ENCODE measurements at regions of chr2 and their contacts with region 1.

Region 1: DNA sequence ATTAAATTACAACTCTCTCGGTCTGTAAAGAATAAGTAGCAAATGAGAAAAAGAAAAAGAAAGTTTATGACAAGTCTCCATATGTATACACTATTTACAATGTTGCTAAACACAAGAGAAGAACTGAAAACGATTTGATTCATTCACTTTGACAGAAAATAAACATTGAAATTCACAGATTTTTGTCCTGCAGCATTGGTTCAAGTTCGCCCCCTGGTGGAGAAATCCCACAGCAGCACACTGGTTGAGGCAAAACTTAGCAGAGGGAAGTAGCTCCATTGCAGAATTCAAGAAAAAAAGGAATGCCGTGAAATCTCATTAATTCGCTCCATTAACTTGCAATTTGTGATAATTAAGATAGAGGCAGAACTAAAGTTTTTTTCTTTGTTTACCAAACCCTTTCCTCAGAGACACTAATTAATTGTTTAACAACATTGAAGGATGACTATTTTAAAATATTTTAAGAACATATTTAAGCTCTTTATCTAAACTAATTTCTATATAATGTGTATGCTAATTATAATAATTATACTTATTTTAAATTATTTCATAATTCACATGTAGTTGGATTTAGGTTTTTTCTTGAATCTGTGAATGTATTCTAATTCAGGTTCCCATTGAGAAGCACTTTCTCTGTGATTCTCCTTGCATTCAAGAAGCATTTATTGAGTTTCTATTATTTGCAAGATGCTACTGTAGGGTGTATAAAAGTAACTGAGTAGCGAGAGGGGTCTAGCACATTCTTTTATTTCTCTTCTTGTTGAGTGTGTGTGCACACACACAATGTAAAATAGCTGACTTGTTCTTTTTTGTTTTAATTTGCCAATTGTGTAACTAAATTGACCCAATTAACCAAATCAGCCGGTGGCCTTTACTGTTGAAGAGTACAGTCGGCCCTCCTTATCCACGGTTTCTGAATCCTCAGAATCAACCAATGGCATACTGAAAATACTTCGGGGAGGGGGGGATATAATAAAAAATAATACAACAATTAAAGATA is 74.1 kb downstream of the COL4A3 start:
- DNase-seq: peak; percentile 80
- ATAC-seq: no peak
- H3K4me3 Mint-ChIP-seq: no peak overlapping the region
- H3K27ac Mint-ChIP-seq: no peak overlapping the region
- H3K4me1 Mint-ChIP-seq: no peaks in the 10 kb centered on the region
- H3K27me3 Mint-ChIP-seq: peaks cover 6% of the 10 kb centered on the region

Region 2: DNA sequence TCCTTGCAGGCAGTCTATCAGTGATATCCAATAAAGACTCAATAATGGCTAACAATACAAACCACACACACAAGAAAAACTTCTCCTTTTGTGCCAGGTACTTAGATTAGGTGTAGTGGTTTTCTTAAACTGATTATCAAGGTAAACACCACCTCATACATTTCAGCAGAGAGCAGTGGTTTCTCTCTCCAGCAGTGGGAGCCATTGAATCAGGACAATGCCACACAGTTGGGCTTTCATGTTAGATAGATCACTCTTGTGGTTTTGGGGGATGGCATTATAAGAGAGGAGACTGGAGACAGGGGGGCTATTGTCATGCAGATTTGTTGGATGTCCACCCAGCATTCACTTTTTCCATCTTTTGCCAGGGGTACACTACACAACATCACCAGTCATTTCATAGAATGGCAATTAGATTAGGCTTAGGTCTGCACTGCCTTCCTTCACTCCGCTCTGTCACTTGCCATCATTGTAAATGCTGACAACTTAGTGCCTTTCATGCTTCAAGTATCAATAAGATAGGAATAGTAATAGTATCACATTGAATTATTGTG is 425.3 kb before region 1 on chr2:
- CTCF ChIA-PET with region 1: no interaction called
- POLR2A ChIA-PET with region 1: no interaction called
- intact Hi-C with region 1: loop called in 1 of 2 experiments (anchors 10 kb)
- DNase-seq: peak; percentile 17
- ATAC-seq: no peak
- H3K4me3 Mint-ChIP-seq: no peak overlapping the region
- H3K27ac Mint-ChIP-seq: no peak overlapping the region
- H3K4me1 Mint-ChIP-seq: no peaks in the 10 kb centered on the region
- H3K27me3 Mint-ChIP-seq: peaks cover 23% of the 10 kb centered on the region

Region 3: DNA sequence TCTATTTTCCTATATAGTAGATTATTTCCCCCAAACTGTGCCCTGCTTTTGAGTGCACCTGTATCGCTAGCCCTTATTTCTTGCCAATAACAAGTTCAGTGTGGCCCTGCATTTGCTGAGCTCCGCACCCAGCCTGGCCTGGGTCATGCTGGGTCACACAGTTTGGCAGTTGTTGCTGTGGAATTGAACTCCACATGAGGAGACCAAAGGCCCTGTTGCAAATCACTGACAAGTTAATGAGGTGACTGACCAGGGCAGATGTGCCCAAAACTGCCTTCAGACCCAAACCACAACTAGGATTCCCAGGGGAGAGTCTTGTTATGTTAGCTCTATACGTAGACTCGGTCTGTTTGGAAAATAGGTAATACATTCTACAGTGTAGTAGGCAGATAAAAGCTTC is 105.6 kb before region 1 on chr2:
- CTCF ChIA-PET with region 1: interaction called, 20 read pairs
- POLR2A ChIA-PET with region 1: interaction called, 4 read pairs
- intact Hi-C with region 1: loop called (anchors 1 kb)
- DNase-seq: no peak
- ATAC-seq: no peak
- H3K4me3 Mint-ChIP-seq: no peak overlapping the region
- H3K27ac Mint-ChIP-seq: no peak overlapping the region
- H3K4me1 Mint-ChIP-seq: no peaks in the 10 kb centered on the region
- H3K27me3 Mint-ChIP-seq: peaks cover 7% of the 10 kb centered on the region

Region 4: DNA sequence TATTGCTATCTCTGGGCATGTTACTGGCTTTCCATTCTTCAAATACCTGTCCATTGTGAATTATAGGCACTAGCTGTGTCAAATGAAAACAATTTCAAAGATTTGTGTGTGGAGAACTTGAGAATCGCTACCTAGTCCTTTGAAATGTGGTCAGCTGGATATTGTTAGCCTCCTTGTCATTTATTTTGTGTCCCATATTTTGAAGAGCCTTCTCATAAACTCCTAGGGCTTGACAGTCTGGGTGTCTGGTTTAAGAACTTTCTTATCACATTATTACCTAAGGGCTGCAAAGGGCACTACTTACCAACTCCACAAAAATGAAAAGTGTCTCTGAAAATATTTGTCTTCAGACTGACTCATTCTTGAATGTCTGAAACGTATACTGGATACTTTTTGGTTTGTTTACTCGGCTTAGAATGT is 23.9 kb before region 1 on chr2:
- CTCF ChIA-PET with region 1: interaction called, 10 read pairs
- POLR2A ChIA-PET with region 1: no interaction called
- intact Hi-C with region 1: no loop called
- DNase-seq: no peak
- ATAC-seq: no peak
- H3K4me3 Mint-ChIP-seq: no peak overlapping the region
- H3K27ac Mint-ChIP-seq: no peak overlapping the region
- H3K4me1 Mint-ChIP-seq: no peaks in the 10 kb centered on the region
- H3K27me3 Mint-ChIP-seq: peaks cover 7% of the 10 kb centered on the region

Region 5: GRCh38 chr2:227252831-227253230 is 14.3 kb after region 1 on chr2:
- CTCF ChIA-PET with region 1: interaction called, 29 read pairs
- POLR2A ChIA-PET with region 1: no interaction called
- intact Hi-C with region 1: no loop called
- DNase-seq: no peak
- ATAC-seq: no peak
- H3K4me3 Mint-ChIP-seq: no peak overlapping the region
- H3K27ac Mint-ChIP-seq: no peak overlapping the region
- H3K4me1 Mint-ChIP-seq: no peaks in the 10 kb centered on the region
- H3K27me3 Mint-ChIP-seq: peaks cover 3% of the 10 kb centered on the region

Region 6: DNA sequence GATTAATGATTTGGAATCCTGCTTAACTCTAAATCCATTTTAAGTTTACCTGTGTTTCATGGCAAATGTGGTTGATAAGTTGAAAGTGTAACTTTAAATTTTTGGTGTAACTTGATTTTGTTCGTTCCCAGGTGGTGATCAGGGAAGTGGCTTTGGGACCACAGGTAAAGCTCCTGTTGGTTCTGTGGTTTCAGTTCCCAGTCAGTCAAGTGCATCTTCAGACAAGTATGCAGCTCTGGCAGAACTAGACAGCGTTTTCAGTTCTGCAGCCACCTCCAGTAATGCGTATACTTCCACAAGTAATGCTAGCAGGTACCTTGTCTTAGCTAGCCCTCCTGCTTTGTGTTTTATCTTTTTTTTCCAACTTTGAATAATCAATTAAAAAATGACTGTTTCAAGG is 296.2 kb after region 1 on chr2:
- CTCF ChIA-PET with region 1: no interaction called
- POLR2A ChIA-PET with region 1: no interaction called
- intact Hi-C with region 1: no loop called
- DNase-seq: no peak
- ATAC-seq: no peak
- H3K4me3 Mint-ChIP-seq: no peak overlapping the region
- H3K27ac Mint-ChIP-seq: no peak overlapping the region
- H3K4me1 Mint-ChIP-seq: peaks cover 12% of the 10 kb centered on the region
- H3K27me3 Mint-ChIP-seq: no peaks in the 10 kb centered on the region